ENCODE measurements at regions of chr2 and their contacts with region 1.

Region 1: DNA sequence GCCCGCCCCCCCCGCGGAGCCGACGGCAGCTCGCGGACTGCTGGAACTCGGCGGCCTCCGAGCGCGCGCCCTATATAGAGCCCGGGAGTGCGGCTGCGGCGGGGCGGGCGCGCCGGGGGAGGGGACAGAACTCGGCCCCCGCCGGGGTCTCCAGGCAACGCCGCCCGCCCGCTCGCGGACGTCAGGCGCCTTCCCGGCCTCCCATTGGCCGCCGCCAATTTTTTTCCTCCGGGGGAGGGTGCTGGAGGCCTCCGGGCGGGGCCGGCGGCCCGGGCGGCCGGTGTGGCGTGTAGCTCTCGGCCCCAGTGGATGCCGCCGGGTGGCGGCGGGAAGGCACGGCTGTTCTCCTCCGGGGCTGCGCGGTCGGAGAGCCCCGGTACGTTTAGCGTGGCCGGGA is at the start of gene ZFP36L2:
- DNase-seq: peak; percentile 89 to 99 (median 96)
- ATAC-seq: peak; percentile 58
- H3K4me3 ChIP-seq: peak within 1 kb of the TSS; percentile 89 to 94
- H3K4me3 Mint-ChIP-seq: peak within 1 kb of the TSS; percentile 96
- H3K27ac ChIP-seq: peak within 1 kb of the TSS; percentile 81 to 92
- H3K27ac Mint-ChIP-seq: peak within 1 kb of the TSS; percentile 94
- H3K4me1 ChIP-seq: peaks cover 23% of the 10 kb centered on the region
- H3K4me1 Mint-ChIP-seq: peaks cover 28% of the 10 kb centered on the region
- H3K27me3 ChIP-seq: no peaks in the 10 kb centered on the region
- H3K27me3 Mint-ChIP-seq: no peaks in the 10 kb centered on the region
- CTCF ChIP-seq: no peak
- total RNA-seq, gene ZFP36L2: 1,270 to 1,311 TPM

Region 2: DNA sequence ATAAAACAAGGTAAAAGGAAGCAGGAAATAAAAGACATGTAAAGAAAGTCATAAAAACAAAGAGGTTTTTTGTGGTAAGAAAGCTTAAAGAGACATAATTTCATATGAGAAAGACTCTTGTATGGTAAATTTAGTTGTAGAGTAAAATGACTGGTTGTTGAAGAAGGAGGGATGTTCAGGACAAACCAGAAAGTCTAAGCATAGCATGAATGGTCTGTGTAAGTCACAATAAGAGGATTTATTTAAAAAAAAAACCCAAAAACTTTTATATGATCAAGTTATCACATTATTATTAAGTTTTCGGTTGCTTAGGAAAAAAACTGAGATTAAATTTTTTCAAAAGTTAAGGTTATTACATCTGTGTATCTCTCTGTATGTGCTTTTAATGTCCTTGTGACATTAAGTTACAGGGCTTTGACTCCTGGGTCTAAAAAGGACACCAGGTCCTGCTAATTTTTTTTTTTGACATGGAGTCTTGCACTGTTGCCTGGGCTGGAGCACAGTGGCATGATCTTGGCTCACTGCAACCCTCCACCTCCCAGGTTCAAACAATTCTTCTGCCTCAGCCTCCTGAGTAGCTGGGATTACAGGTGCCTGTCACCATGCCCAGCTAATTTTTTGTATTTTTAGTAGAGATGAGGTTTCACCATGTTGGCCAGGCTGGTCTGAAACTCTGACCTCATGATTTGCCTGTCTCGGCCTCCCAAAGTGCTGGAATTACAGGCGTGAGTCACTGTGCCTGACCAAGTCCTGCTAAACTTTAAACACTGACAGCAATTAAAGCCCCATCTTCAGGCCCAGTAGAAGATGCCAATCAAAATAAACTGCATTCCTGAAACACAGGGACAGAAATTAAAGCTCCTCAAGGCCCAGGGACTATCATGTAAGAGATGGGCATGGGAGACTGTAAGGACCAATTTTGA is 448.4 kb before region 1 on chr2:
- CTCF ChIA-PET with region 1: no interaction called
- POLR2A ChIA-PET with region 1: no interaction called
- intact Hi-C with region 1: no loop called
- DNase-seq: peak in 1 of 9 experiments; percentile 9
- ATAC-seq: no peak
- H3K4me3 ChIP-seq: no peak overlapping the region
- H3K4me3 Mint-ChIP-seq: peak overlapping the region; percentile 9
- H3K27ac ChIP-seq: no peak overlapping the region
- H3K27ac Mint-ChIP-seq: peak overlapping the region; percentile 61
- H3K4me1 ChIP-seq: peaks cover 25% of the 10 kb centered on the region
- H3K4me1 Mint-ChIP-seq: peaks cover 23% of the 10 kb centered on the region
- H3K27me3 ChIP-seq: no peaks in the 10 kb centered on the region
- H3K27me3 Mint-ChIP-seq: no peaks in the 10 kb centered on the region
- CTCF ChIP-seq: no peak

Region 3: DNA sequence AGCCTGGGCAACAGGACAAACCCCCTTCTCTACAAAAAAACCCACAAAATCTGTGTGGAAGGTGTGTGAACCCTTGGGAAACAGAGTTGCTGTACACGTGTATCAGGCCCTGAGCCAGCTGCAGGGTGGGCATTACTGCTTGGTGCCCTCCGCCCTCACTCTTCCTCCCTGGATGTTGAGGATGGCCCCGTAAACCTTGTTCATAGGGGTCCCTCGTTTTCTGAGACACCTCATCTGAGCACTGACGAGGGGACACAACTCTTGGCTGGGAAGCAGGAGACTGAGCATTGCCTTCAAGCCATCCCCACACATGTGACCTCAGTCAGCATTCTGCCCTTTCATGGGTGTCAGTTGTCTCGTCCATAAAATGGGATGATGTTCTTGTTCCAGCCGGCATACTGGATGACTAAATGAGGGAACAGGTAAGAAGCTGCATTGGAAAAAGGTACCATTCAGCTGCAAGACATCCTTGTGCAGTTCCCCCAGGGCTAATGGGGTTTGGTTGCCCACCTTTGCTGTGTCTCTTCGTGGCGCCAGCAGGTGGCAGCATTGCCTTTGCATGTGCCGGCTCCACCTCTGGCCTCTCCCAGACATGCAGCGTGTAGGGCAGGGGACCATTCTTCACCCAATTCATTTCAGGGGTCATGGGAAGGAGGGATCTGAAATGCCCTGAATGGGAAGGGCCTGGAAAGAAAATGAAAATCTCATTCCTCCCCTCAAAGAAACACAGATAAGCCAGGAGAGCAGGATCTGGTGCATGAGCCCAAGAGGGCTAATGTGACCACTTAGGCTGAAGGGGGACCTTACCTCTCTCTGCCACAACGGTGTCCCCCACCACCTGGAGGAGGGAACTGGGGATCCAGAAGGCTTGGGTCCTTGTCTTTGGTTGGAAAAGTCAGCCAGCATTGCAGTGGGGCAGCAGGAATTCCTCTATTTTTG is 397.8 kb before region 1 on chr2:
- CTCF ChIA-PET with region 1: no interaction called
- POLR2A ChIA-PET with region 1: no interaction called
- intact Hi-C with region 1: loop called in 1 of 2 experiments (anchors 2 kb)
- DNase-seq: peak; percentile 34 to 84 (median 70)
- ATAC-seq: peak; percentile 97
- H3K4me3 ChIP-seq: no peak overlapping the region
- H3K4me3 Mint-ChIP-seq: no peak overlapping the region
- H3K27ac ChIP-seq: no peak overlapping the region
- H3K27ac Mint-ChIP-seq: no peak overlapping the region
- H3K4me1 ChIP-seq: peaks cover 9% of the 10 kb centered on the region
- H3K4me1 Mint-ChIP-seq: peaks cover 17% of the 10 kb centered on the region
- H3K27me3 ChIP-seq: peaks cover 0 to 2% of the 10 kb centered on the region in 2 experiments
- H3K27me3 Mint-ChIP-seq: peaks cover 1% of the 10 kb centered on the region
- CTCF ChIP-seq: peak; percentile 88

Region 4: GRCh38 chr2:42844901-42845821 is 381.4 kb before region 1 on chr2:
- CTCF ChIA-PET with region 1: no interaction called
- POLR2A ChIA-PET with region 1: no interaction called
- intact Hi-C with region 1: no loop called
- DNase-seq: no peak
- ATAC-seq: no peak
- H3K4me3 ChIP-seq: no peak overlapping the region
- H3K4me3 Mint-ChIP-seq: no peak overlapping the region
- H3K27ac ChIP-seq: no peak overlapping the region
- H3K27ac Mint-ChIP-seq: no peak overlapping the region
- H3K4me1 ChIP-seq: no peaks in the 10 kb centered on the region
- H3K4me1 Mint-ChIP-seq: no peaks in the 10 kb centered on the region
- H3K27me3 ChIP-seq: no peaks in the 10 kb centered on the region
- H3K27me3 Mint-ChIP-seq: no peaks in the 10 kb centered on the region
- CTCF ChIP-seq: no peak

Region 5: DNA sequence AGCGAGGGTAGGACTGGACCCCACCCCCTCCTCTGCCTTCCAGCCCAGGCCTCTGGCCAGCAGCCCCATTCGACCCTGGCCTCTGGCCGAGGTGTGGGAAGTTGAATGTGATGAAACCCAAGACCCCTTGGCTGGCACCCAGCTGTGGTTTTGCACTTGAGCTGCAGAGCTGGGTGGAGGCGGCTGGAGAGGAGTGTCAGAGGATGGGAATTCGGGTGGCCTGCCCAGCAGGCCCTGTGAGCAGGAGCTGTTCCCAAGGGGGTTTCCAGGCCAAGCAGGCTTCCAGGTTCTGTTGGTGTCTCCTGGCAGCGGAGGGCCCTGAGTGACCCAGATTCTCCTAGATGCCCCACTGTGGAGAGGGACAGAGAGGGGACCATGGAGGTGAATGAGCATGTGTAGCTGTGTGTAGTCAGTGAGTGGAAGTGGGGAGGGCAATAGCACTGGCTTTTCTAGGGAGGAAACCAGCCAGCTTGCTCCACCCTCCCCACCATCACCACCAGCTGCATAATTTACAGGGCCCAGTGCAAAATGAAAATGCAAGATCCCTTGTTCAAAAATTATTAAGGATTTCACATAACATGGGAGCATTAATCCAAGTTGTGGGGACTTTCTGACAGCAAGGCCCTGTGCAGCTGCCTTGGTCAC is 262.0 kb before region 1 on chr2:
- CTCF ChIA-PET with region 1: interaction called, 16 read pairs
- POLR2A ChIA-PET with region 1: interaction called, 3 read pairs
- intact Hi-C with region 1: no loop called
- DNase-seq: no peak
- ATAC-seq: no peak
- H3K4me3 ChIP-seq: no peak overlapping the region
- H3K4me3 Mint-ChIP-seq: no peak overlapping the region
- H3K27ac ChIP-seq: no peak overlapping the region
- H3K27ac Mint-ChIP-seq: no peak overlapping the region
- H3K4me1 ChIP-seq: peaks cover 18% of the 10 kb centered on the region
- H3K4me1 Mint-ChIP-seq: peaks cover 19% of the 10 kb centered on the region
- H3K27me3 ChIP-seq: no peaks in the 10 kb centered on the region
- H3K27me3 Mint-ChIP-seq: peaks cover 6% of the 10 kb centered on the region
- CTCF ChIP-seq: no peak

Region 6: GRCh38 chr2:43059183-43059897 is 167.2 kb before region 1 on chr2:
- CTCF ChIA-PET with region 1: interaction called, 6 read pairs
- POLR2A ChIA-PET with region 1: interaction called, 5 read pairs
- intact Hi-C with region 1: loop called in 1 of 2 experiments (anchors 2 kb)
- DNase-seq: peak; percentile 8 to 84 (median 51)
- ATAC-seq: peak; percentile 85
- H3K4me3 ChIP-seq: no peak overlapping the region
- H3K4me3 Mint-ChIP-seq: peak overlapping the region; percentile 46
- H3K27ac ChIP-seq: peak overlapping the region; percentile 36 to 46
- H3K27ac Mint-ChIP-seq: peak overlapping the region; percentile 87
- H3K4me1 ChIP-seq: peaks cover 27% of the 10 kb centered on the region
- H3K4me1 Mint-ChIP-seq: peaks cover 28% of the 10 kb centered on the region
- H3K27me3 ChIP-seq: no peaks in the 10 kb centered on the region
- H3K27me3 Mint-ChIP-seq: no peaks in the 10 kb centered on the region
- CTCF ChIP-seq: no peak

Region 7: DNA sequence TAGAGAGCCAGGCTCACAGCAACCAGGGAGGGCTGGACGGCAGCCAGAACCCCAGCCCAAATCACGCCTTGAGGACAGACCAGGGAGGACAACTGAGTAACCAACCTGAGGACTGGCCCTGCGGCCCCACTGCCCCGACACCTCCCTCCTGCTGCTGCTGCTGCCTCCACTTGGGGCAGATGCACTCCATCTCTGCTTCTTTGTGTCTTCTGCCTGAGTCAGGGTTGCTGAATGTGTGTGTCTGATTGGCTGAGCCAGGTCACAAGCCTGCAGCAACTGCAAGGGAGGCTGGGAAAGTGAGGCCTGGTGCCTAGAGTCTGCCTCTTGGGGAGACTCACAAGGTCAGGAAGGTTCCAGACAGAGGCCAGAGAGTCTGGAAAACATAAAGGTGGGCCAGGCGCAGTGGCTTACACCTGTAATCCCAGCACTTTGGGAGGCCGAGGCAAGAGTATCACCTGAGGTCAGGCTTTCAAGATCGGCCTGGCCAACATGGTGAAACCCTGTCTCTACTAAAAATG is 83.6 kb before region 1 on chr2:
- CTCF ChIA-PET with region 1: interaction called, 83 read pairs
- POLR2A ChIA-PET with region 1: interaction called, 1,192 read pairs
- intact Hi-C with region 1: no loop called
- DNase-seq: peak in 7 of 9 experiments; percentile 24 to 74 (median 51)
- ATAC-seq: peak; percentile 41
- H3K4me3 ChIP-seq: peak overlapping the region; percentile 37 to 53
- H3K4me3 Mint-ChIP-seq: peak overlapping the region; percentile 66
- H3K27ac ChIP-seq: peak overlapping the region; percentile 40 to 49
- H3K27ac Mint-ChIP-seq: peak overlapping the region; percentile 92
- H3K4me1 ChIP-seq: peaks cover 76% of the 10 kb centered on the region
- H3K4me1 Mint-ChIP-seq: peaks cover 70% of the 10 kb centered on the region
- H3K27me3 ChIP-seq: no peaks in the 10 kb centered on the region
- H3K27me3 Mint-ChIP-seq: no peaks in the 10 kb centered on the region
- CTCF ChIP-seq: no peak

Region 8: DNA sequence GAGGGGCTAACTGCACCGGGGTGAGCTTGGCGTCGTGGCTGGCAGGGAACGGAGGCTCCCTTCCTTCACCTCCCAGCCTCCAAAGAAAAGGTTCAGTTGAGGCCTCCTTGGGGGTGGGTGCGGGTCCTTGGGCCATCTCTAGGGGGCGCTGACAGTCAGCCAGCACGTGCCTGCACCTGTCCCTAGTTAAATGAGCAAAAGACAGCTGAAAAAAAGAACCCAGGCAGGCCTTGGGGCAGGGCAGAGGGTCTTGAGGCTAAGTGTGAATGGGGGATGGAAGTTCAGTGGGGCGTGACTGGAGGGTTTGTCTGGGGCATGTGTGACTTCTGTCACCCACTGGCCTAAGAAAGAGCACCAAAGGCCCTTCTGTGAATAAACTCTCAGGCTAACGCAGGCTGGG is 56.6 kb before region 1 on chr2:
- CTCF ChIA-PET with region 1: interaction called, 537 read pairs
- POLR2A ChIA-PET with region 1: interaction called, 828 read pairs
- intact Hi-C with region 1: loop called in 1 of 2 experiments (anchors 1 kb)
- DNase-seq: peak; percentile 54 to 86 (median 72)
- ATAC-seq: peak; percentile 15
- H3K4me3 ChIP-seq: peak overlapping the region; percentile 27 to 32
- H3K4me3 Mint-ChIP-seq: peak overlapping the region; percentile 86
- H3K27ac ChIP-seq: peak overlapping the region; percentile 47 to 67
- H3K27ac Mint-ChIP-seq: peak overlapping the region; percentile 99
- H3K4me1 ChIP-seq: peaks cover 70% of the 10 kb centered on the region
- H3K4me1 Mint-ChIP-seq: peaks cover 82% of the 10 kb centered on the region
- H3K27me3 ChIP-seq: no peaks in the 10 kb centered on the region
- H3K27me3 Mint-ChIP-seq: no peaks in the 10 kb centered on the region
- CTCF ChIP-seq: peak; percentile 59

Region 9: GRCh38 chr2:43542285-43542937 is 315.9 kb after region 1 on chr2:
- CTCF ChIA-PET with region 1: interaction called, 15 read pairs
- POLR2A ChIA-PET with region 1: interaction called, 4 read pairs
- intact Hi-C with region 1: loop called (anchors 5 kb)
- DNase-seq: peak in 2 of 9 experiments; percentile 48 to 66
- ATAC-seq: peak; percentile 88
- H3K4me3 ChIP-seq: no peak overlapping the region
- H3K4me3 Mint-ChIP-seq: no peak overlapping the region
- H3K27ac ChIP-seq: no peak overlapping the region
- H3K27ac Mint-ChIP-seq: no peak overlapping the region
- H3K4me1 ChIP-seq: no peaks in the 10 kb centered on the region
- H3K4me1 Mint-ChIP-seq: peaks cover 16% of the 10 kb centered on the region
- H3K27me3 ChIP-seq: no peaks in the 10 kb centered on the region
- H3K27me3 Mint-ChIP-seq: no peaks in the 10 kb centered on the region
- CTCF ChIP-seq: peak; percentile 87

Measured in CD8-positive, alpha-beta T cell (primary cell).